H1 (cell line): ENCODE measurements at regions of chr18 and their contacts with region 1.

Region 1: GRCh38 chr18:10560450-10561045 is 34.7 kb downstream of the NAPG start:
- DNase-seq: peak; percentile 49 to 91
- H3K4me3 ChIP-seq: 0 out of 8 replicates have a peak overlapping the region, but pooled peaks of 1 of the 4 experiments have one; percentile 26
- H3K27ac ChIP-seq: no peak overlapping the region
- H3K4me1 ChIP-seq: peaks cover 0 to 6% (median 3%) of the 10 kb centered on the region in 4 experiments; a peak in 3 of 7 replicates
- H3K27me3 ChIP-seq: no peaks in the 10 kb centered on the region
- CTCF ChIP-seq: peak; percentile 16 to 79 (median 70)
- EP300 ChIP-seq: no peak
- POLR2A ChIP-seq: no peak
- RAD21 ChIP-seq: peak; percentile 78 to 83

Region 2: GRCh38 chr18:10490401-10491165 is 70.0 kb before region 1 on chr18:
- CTCF ChIA-PET with region 1: no interaction called
- POLR2A ChIA-PET with region 1: no interaction called
- DNase-seq: peak in 1 of 2 experiments; percentile 57
- H3K4me3 ChIP-seq: no peak overlapping the region
- H3K27ac ChIP-seq: no peak overlapping the region
- H3K4me1 ChIP-seq: no peaks in the 10 kb centered on the region; a peak in 1 of 7 replicates
- H3K27me3 ChIP-seq: no peaks in the 10 kb centered on the region
- CTCF ChIP-seq: peak; percentile 72 to 81 (median 74)
- EP300 ChIP-seq: no peak
- POLR2A ChIP-seq: no peak
- RAD21 ChIP-seq: peak; percentile 56 to 68; a peak in 3 of 4 replicates

Region 3: DNA sequence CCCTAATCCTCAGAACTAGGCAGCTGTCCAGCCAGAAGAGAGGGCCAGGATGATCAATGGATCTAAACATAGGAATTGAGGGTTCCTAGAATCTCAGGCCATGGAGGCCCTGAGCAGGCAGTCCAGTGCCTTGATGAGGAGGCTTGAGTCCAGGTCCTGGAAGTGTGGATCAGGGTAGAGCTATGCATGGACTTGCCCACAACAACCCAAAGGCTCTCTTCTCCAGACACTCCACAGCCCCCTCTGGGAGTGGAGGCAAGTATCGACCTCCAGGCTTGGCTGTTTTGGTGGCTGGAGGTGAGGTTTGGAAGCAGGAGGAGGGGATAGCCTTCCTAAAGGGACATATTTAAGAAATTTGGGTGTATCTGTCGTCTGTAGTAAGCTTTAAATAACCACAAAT is 11.0 kb after region 1 on chr18:
- CTCF ChIA-PET with region 1: interaction called, 26 read pairs
- POLR2A ChIA-PET with region 1: interaction called, 4 read pairs
- DNase-seq: peak in 1 of 2 experiments; percentile 19
- H3K4me3 ChIP-seq: no peak overlapping the region
- H3K27ac ChIP-seq: no peak overlapping the region
- H3K4me1 ChIP-seq: no peaks in the 10 kb centered on the region
- H3K27me3 ChIP-seq: no peaks in the 10 kb centered on the region
- CTCF ChIP-seq: no peak
- EP300 ChIP-seq: no peak
- POLR2A ChIP-seq: no peak
- RAD21 ChIP-seq: no peak

Region 4: GRCh38 chr18:10660179-10660884 is 99.8 kb after region 1 on chr18:
- CTCF ChIA-PET with region 1: interaction called, 11 read pairs
- POLR2A ChIA-PET with region 1: no interaction called
- DNase-seq: no peak
- H3K4me3 ChIP-seq: no peak overlapping the region
- H3K27ac ChIP-seq: no peak overlapping the region
- H3K4me1 ChIP-seq: peaks cover 0 to 6% (median 0%) of the 10 kb centered on the region in 4 experiments; a peak in 1 of 7 replicates
- H3K27me3 ChIP-seq: no peaks in the 10 kb centered on the region
- CTCF ChIP-seq: no peak
- EP300 ChIP-seq: no peak
- POLR2A ChIP-seq: no peak
- RAD21 ChIP-seq: no peak

Region 5: DNA sequence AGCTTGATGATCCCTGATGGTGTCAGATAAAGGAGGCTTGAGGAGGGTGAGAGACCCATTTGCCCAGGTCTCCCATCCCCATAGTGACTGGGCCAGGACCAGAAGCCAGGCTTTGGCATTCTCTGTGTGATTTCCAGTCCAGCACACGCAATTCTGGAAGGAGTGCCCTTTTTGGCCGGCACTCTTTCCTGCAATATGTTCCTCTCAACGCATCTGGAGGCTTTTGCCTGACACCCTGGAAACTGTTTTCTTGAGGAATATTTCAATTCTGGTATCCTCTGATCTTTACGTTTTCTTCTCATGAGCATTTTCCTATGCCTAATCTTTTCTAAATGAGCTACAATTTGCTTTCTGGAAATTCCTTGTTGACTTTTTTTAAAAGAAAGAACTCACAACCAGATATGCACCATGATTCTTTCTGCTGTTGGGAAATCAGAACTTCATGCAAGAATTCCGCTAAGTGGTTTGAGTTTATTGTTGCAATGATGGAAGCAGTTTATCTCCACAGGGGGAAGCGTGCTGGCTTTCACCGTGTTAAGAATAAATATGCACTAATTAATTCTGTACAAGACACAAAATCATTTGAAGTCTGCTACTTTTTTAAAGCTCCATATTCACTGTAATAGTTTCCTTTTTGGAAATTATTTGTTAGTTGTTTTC is 109.0 kb after region 1 on chr18:
- CTCF ChIA-PET with region 1: interaction called, 10 read pairs
- POLR2A ChIA-PET with region 1: no interaction called
- DNase-seq: no peak
- H3K4me3 ChIP-seq: no peak overlapping the region
- H3K27ac ChIP-seq: no peak overlapping the region
- H3K4me1 ChIP-seq: no peaks in the 10 kb centered on the region
- H3K27me3 ChIP-seq: no peaks in the 10 kb centered on the region
- CTCF ChIP-seq: no peak
- EP300 ChIP-seq: no peak
- POLR2A ChIP-seq: no peak
- RAD21 ChIP-seq: no peak